Prostate gland (tissue), 2 donors: ENCODE measurements at regions of chr5 and their contacts with region 1.

Region 1: GRCh38 chr5:177357459-177358351 is at the start of gene RGS14:
- DNase-seq: no peak
- H3K4me3 ChIP-seq: peak within 1 kb of the TSS; percentile 14 to 24
- H3K27ac ChIP-seq: no peak within 1 kb of the TSS
- H3K4me1 ChIP-seq: no peaks in the 10 kb centered on the region
- H3K27me3 ChIP-seq: no peaks in the 10 kb centered on the region
- CTCF ChIP-seq: no peak
- POLR2A ChIP-seq: no peak
- total RNA-seq, gene RGS14: 13.3 to 24.2 TPM

Region 2: GRCh38 chr5:177311723-177312648 is 45.7 kb before region 1 on chr5 and contains the start of gene MXD3:
- intact Hi-C with region 1: loop called (anchors 5 kb)
- DNase-seq: peak; percentile 96
- H3K4me3 ChIP-seq: peak within 1 kb of the TSS; percentile 36 to 50
- H3K27ac ChIP-seq: no peak within 1 kb of the TSS
- H3K4me1 ChIP-seq: peaks cover 11% of the 10 kb centered on the region
- H3K27me3 ChIP-seq: no peaks in the 10 kb centered on the region
- CTCF ChIP-seq: peak in 1 of 4 experiments; percentile 8
- POLR2A ChIP-seq: no peak
- total RNA-seq, gene MXD3: 13.5 to 20.5 TPM

Region 3: GRCh38 chr5:178786859-178787760 is 1429.4 kb after region 1 on chr5:
- intact Hi-C with region 1: no loop called
- DNase-seq: peak; percentile 38
- H3K4me3 ChIP-seq: no peak overlapping the region
- H3K27ac ChIP-seq: no peak overlapping the region
- H3K4me1 ChIP-seq: no peaks in the 10 kb centered on the region
- H3K27me3 ChIP-seq: no peaks in the 10 kb centered on the region
- CTCF ChIP-seq: no peak
- POLR2A ChIP-seq: no peak